Heart right ventricle (tissue), 16 donors: ENCODE measurements at regions of chr7 and their contacts with region 1.

Region 1: DNA sequence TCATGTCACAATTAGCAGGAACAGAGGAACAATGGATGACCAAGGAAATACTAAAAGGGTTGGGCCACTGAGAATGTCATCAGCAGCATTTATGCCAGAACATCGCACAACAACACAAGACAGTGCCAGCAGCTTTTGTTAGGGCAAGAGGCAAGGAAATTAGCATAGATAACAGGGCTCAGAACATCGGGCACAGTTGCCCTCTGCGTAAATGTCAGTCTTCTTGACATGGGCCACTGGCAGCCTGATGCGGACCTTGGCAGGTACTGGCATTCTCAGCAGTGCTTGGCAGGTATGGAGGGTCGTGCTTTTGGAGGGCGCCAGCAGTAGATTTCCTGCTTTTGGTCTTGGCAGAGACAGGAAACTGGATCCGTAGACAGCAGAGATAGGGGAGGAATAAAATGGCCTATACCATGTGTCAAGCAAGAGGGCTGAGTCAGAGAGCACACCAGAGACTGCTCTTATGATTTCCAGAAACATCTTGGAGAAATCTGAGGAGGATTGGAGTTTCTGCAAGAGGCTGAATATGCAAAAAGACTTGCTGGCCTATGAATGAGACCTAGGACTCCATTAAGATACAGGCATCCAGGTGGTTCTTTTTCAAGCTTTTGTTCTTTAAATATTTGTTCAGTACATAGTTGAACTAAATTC is 371.5 kb upstream of the MTPN start:
- DNase-seq: peak; percentile 36 to 55
- ATAC-seq: peak; percentile 42 to 98 (median 93)
- H3K4me3 ChIP-seq: no peak overlapping the region
- H3K27ac ChIP-seq: peak overlapping the region in 8 of 10 donors; percentile 12 to 63 (median 42)
- H3K4me1 ChIP-seq: peaks cover 0 to 14% (median 0%) of the 10 kb centered on the region in 9 donors
- H3K27me3 ChIP-seq: no peaks in the 10 kb centered on the region
- CTCF ChIP-seq: no peak

Region 2: DNA sequence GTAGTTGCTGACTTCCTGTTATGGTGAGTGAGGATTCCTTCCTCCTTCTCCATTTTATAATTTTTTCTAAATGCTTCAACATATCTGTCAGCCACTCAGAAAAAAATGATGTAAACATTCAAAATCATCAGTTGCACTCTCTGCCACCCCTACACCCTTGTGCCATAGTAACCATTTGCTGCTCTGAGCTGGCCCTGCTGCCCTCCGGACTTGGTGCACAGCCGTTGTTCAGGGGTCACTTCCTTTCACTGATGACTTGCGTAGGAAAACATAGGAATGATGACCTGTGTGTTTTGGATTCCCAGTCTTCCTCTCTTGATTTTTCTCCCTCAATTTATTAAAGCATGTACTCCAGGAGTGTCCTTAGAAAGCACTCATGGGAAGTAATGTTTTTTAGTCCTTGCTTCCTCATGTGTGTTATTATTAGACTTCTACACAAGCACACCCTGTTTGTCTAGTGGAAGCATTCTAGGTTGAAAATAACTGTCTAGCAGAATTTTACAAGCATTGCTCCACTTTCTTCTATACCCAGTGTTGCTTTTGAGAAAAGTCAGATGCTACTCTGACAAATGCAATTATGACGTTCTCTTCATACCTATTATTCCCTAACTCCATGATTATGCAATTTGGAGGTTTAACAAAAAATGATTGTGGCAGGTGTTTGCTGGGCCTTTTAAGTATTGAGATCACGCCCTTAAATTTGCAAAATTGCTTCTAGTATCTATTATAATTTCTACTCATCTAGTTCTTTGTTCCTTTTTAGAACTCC is 308.9 kb before region 1 on chr7:
- intact Hi-C with region 1: loop called in 2 of 10 experiments (anchors 5 kb)
- DNase-seq: no peak
- ATAC-seq: peak in 2 of 8 donors; percentile 11 to 29
- H3K4me3 ChIP-seq: no peak overlapping the region
- H3K27ac ChIP-seq: peak overlapping the region in 2 of 10 donors; percentile 6 to 27
- H3K4me1 ChIP-seq: peaks cover 0 to 23% (median 4%) of the 10 kb centered on the region in 9 donors
- H3K27me3 ChIP-seq: no peaks in the 10 kb centered on the region
- CTCF ChIP-seq: no peak

Region 3: GRCh38 chr7:136275794-136276193 is 72.9 kb before region 1 on chr7:
- intact Hi-C with region 1: no loop called
- DNase-seq: no peak
- ATAC-seq: no peak
- H3K4me3 ChIP-seq: no peak overlapping the region
- H3K27ac ChIP-seq: no peak overlapping the region
- H3K4me1 ChIP-seq: no peaks in the 10 kb centered on the region
- H3K27me3 ChIP-seq: no peaks in the 10 kb centered on the region
- CTCF ChIP-seq: no peak